H1 (cell line): ENCODE measurements at regions of chr3 and their contacts with region 1.

Region 1: DNA sequence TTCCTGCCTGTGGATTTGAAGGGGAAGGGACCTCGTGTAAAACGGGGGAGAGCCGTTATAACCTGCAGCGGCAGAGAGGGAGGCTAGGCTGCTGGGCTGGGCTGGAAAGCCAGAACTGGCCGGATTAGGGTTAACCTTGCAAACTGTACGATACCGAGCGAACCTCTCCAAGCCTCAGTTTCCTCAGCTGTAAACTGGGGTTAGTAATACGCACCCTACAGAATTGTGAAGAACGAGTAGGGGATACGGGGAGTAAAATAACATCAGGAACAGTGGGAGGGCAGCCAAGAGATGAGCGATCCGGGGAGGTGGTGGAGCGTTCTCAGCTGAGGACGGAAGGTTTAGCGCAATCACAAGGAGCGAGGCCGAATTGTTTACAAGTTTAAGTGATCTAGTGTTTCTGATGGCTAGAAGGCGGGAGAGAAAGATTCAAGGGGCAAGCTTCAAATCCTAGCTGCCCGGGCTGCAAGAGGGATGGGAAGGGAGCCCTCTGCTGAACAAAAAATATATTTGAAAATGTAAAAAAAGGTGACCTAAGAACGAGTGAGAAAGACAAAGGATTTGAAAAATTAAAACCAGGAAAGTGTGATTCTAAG is 768 bp upstream of the SEMA5B start:
- DNase-seq: no peak
- H3K4me3 ChIP-seq: peak overlapping the region; percentile 76 to 90 (median 82)
- H3K27ac ChIP-seq: no peak overlapping the region
- H3K4me1 ChIP-seq: peaks cover 0 to 18% (median 10%) of the 10 kb centered on the region in 4 experiments; a peak in 6 of 7 replicates
- H3K27me3 ChIP-seq: peaks cover 0 to 18% (median 10%) of the 10 kb centered on the region in 4 experiments; a peak in 5 of 7 replicates
- CTCF ChIP-seq: peak in 2 of 3 experiments; percentile 36 to 70; a peak in 3 of 4 replicates
- EP300 ChIP-seq: no peak
- POLR2A ChIP-seq: no peak
- RAD21 ChIP-seq: peak; percentile 76 to 81

Region 2: GRCh38 chr3:122957707-122958689 is 70.3 kb before region 1 on chr3:
- CTCF ChIA-PET with region 1: interaction called, 17 read pairs
- POLR2A ChIA-PET with region 1: interaction called, 3 read pairs
- DNase-seq: no peak
- H3K4me3 ChIP-seq: no peak overlapping the region
- H3K27ac ChIP-seq: no peak overlapping the region
- H3K4me1 ChIP-seq: peaks cover 1 to 32% (median 17%) of the 10 kb centered on the region in 4 experiments
- H3K27me3 ChIP-seq: no peaks in the 10 kb centered on the region
- CTCF ChIP-seq: no peak
- EP300 ChIP-seq: no peak
- POLR2A ChIP-seq: no peak
- RAD21 ChIP-seq: no peak

Region 3: DNA sequence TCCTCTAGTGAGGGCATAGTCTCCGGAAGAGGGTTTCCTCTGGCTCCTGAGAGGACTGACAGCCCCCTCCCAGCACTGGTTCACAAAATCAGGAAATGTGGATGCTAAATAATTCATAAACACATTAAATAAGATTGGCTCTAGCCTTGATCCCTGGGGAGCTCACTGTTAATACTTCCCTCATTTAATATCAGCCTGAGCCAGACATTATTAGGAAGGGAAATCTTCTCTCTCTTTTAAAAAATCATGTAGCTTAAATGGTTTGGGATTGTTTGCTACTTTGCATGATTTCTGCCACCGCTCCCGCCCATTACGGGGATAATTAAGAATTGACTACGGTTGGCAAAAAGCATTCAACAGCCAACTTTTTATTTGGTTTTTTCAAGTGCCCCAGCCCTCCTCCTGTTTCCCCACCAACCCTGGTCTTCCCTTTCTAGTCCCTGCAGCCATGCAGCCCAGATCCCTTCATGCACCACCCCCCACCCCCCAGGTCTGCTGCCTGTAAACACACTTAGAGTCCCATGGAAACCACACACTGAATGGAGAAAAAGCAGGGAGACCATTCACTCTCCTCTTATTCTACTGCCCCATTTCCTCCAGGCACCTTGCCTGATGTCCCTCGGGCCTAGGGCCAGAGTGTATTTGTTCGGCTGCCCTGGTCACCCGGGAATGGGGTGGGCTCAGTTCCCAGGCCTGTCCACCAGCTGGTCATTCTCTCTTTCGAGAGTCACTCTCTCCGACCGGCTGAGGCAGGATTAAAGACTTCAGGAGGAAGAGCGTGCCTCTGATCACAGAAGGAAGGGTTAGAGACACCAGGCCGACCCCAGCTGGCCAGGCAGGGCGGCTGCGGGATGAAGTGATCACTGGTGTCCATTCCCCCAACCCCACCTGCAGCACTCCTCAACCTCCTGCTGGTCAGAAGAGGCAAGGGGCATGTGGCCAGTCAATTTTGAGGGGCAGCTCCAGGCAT is 45.8 kb before region 1 on chr3:
- CTCF ChIA-PET with region 1: interaction called, 16 read pairs
- POLR2A ChIA-PET with region 1: interaction called, 4 read pairs
- DNase-seq: no peak
- H3K4me3 ChIP-seq: no peak overlapping the region
- H3K27ac ChIP-seq: no peak overlapping the region
- H3K4me1 ChIP-seq: peaks cover 16 to 52% (median 36%) of the 10 kb centered on the region in 4 experiments
- H3K27me3 ChIP-seq: no peaks in the 10 kb centered on the region
- CTCF ChIP-seq: peak in 2 of 3 experiments; percentile 40; a peak in 3 of 4 replicates
- EP300 ChIP-seq: no peak
- POLR2A ChIP-seq: no peak
- RAD21 ChIP-seq: peak; percentile 32 to 50

Region 4: GRCh38 chr3:123046262-123047061 is 18.1 kb after region 1 on chr3:
- CTCF ChIA-PET with region 1: interaction called, 17 read pairs
- POLR2A ChIA-PET with region 1: interaction called, 3 read pairs
- DNase-seq: no peak
- H3K4me3 ChIP-seq: no peak overlapping the region
- H3K27ac ChIP-seq: no peak overlapping the region
- H3K4me1 ChIP-seq: peaks cover 0 to 4% (median 1%) of the 10 kb centered on the region in 4 experiments; a peak in 5 of 7 replicates
- H3K27me3 ChIP-seq: no peaks in the 10 kb centered on the region
- CTCF ChIP-seq: no peak
- EP300 ChIP-seq: no peak
- POLR2A ChIP-seq: no peak
- RAD21 ChIP-seq: no peak

Region 5: DNA sequence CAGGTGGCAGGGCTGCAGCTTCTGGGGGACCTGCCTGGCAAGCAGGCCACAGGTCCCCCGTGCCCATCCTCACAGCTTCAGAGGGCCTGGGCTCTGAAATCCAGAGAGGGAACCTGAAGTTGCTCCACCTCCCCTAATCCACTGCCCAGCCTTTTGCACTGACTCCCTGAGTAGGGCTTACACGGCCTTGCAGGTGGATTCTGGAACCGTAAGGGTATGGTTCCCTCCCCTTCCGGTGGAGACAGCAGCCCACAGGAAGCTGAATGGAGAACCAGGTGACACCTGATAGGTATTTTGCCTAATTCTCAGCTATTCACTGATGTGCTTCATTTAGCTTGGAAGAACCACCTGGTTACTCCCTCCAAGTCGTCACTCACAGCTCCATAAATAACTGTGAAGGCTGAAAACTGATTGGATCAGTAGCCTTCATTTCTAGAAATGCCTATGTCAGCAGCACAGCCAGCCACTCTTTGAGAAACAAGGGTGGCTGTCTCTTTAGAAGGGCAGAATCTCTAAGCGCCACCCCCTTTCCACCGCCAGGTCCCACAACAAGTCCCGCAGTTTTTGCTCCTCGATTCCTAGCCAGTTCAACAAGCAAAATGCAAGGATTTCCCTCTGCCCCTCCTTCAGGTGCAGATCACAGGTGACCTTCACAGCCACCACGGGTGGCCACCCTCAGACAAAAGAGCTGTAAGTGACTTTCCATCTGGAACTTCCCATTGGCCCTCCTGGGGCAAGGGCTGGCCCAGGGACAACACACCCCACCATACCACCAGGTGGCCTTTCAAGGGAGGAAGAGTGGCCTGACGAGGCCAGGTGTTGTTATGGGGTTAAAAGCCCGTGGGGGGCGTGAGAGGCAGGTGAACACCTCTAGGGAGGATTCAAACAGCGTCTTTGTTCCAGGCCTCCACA is 286.3 kb after region 1 on chr3:
- CTCF ChIA-PET with region 1: no interaction called
- POLR2A ChIA-PET with region 1: no interaction called
- DNase-seq: peak; percentile 90 to 93
- H3K4me3 ChIP-seq: peak overlapping the region in 3 of 4 experiments; percentile 20 to 50 (median 33); a peak in 7 of 8 replicates
- H3K27ac ChIP-seq: peak overlapping the region; percentile 78; the same call in 1 of the 2 replicates
- H3K4me1 ChIP-seq: peaks cover 25 to 60% (median 37%) of the 10 kb centered on the region in 4 experiments
- H3K27me3 ChIP-seq: no peaks in the 10 kb centered on the region; a peak in 1 of 7 replicates
- CTCF ChIP-seq: peak in 2 of 3 experiments; percentile 49 to 56; a peak in 3 of 4 replicates
- EP300 ChIP-seq: peak in 1 of 2 experiments; percentile 91; a peak in 1 of 3 replicates
- POLR2A ChIP-seq: peak in 1 of 2 experiments; percentile 40; a peak in 2 of 3 replicates
- RAD21 ChIP-seq: peak; percentile 9 to 24; a peak in 2 of 4 replicates